Mammary epithelial cell (primary cell): ENCODE measurements at regions of chr19 and their contacts with region 1.

Region 1: GRCh38 chr19:34712395-34713261 is 21.4 kb upstream of the ZNF181 start:
- DNase-seq: peak; percentile 61
- H3K4me3 ChIP-seq: no peak overlapping the region
- H3K27ac ChIP-seq: no peak overlapping the region
- H3K4me1 ChIP-seq: no peaks in the 10 kb centered on the region
- H3K27me3 ChIP-seq: no peaks in the 10 kb centered on the region
- CTCF ChIP-seq: peak; percentile 46 to 55

Region 2: GRCh38 chr19:33778089-33778791 is 934.4 kb before region 1 on chr19:
- CTCF ChIA-PET with region 1: no interaction called
- dilution Hi-C with region 1: no loop called
- in situ Hi-C with region 1: no loop called
- intact Hi-C with region 1: loop called (anchors 5 kb)
- DNase-seq: peak; percentile 52
- H3K4me3 ChIP-seq: peak overlapping the region in 1 of 3 experiments; percentile 14
- H3K27ac ChIP-seq: no peak overlapping the region
- H3K4me1 ChIP-seq: peaks cover 10% of the 10 kb centered on the region
- H3K27me3 ChIP-seq: no peaks in the 10 kb centered on the region
- CTCF ChIP-seq: peak; percentile 99 to 100

Region 3: GRCh38 chr19:34501339-34502320 is 211.0 kb before region 1 on chr19:
- CTCF ChIA-PET with region 1: no interaction called
- dilution Hi-C with region 1: no loop called
- in situ Hi-C with region 1: no loop called
- intact Hi-C with region 1: loop called (anchors 1 kb)
- DNase-seq: peak; percentile 81
- H3K4me3 ChIP-seq: no peak overlapping the region
- H3K27ac ChIP-seq: no peak overlapping the region
- H3K4me1 ChIP-seq: peaks cover 3% of the 10 kb centered on the region
- H3K27me3 ChIP-seq: no peaks in the 10 kb centered on the region
- CTCF ChIP-seq: peak; percentile 92 to 100

Region 4: GRCh38 chr19:34556488-34556887 is 156.1 kb before region 1 on chr19:
- CTCF ChIA-PET with region 1: no interaction called
- dilution Hi-C with region 1: no loop called
- in situ Hi-C with region 1: no loop called
- intact Hi-C with region 1: loop called (anchors 2 kb)
- DNase-seq: peak; percentile 14
- H3K4me3 ChIP-seq: no peak overlapping the region
- H3K27ac ChIP-seq: no peak overlapping the region
- H3K4me1 ChIP-seq: no peaks in the 10 kb centered on the region
- H3K27me3 ChIP-seq: no peaks in the 10 kb centered on the region
- CTCF ChIP-seq: peak; percentile 36 to 43

Region 5: GRCh38 chr19:34639491-34640085 is 73.0 kb before region 1 on chr19:
- CTCF ChIA-PET with region 1: interaction called, 3 read pairs
- dilution Hi-C with region 1: no loop called
- in situ Hi-C with region 1: loop called in 1 of 2 experiments (anchors 5 kb)
- intact Hi-C with region 1: loop called (anchors 1 kb)
- DNase-seq: peak; percentile 35
- H3K4me3 ChIP-seq: no peak overlapping the region
- H3K27ac ChIP-seq: no peak overlapping the region
- H3K4me1 ChIP-seq: no peaks in the 10 kb centered on the region
- H3K27me3 ChIP-seq: no peaks in the 10 kb centered on the region
- CTCF ChIP-seq: peak; percentile 80 to 81

Region 6: GRCh38 chr19:34838753-34839431 is 126.3 kb after region 1 on chr19:
- CTCF ChIA-PET with region 1: no interaction called
- dilution Hi-C with region 1: no loop called
- in situ Hi-C with region 1: no loop called
- intact Hi-C with region 1: no loop called
- DNase-seq: peak; percentile 1
- H3K4me3 ChIP-seq: no peak overlapping the region
- H3K27ac ChIP-seq: no peak overlapping the region
- H3K4me1 ChIP-seq: no peaks in the 10 kb centered on the region
- H3K27me3 ChIP-seq: no peaks in the 10 kb centered on the region
- CTCF ChIP-seq: peak; percentile 13 to 55